AG04450 (cell line): ENCODE measurements at regions of chr4 and their contacts with region 1.

Region 1: GRCh38 chr4:88217169-88217568 is 58.7 kb upstream of the ABCG2 start:
- DNase-seq: no peak
- H3K4me3 ChIP-seq: no peak overlapping the region
- H3K27ac ChIP-seq: no peak overlapping the region
- H3K27me3 ChIP-seq: peaks cover 5% of the 10 kb centered on the region
- CTCF ChIP-seq: no peak

Region 2: GRCh38 chr4:87749883-87750282 is 467.3 kb before region 1 on chr4:
- CTCF ChIA-PET with region 1: no interaction called
- POLR2A ChIA-PET with region 1: no interaction called
- DNase-seq: no peak
- H3K4me3 ChIP-seq: no peak overlapping the region
- H3K27ac ChIP-seq: no peak overlapping the region
- H3K27me3 ChIP-seq: no peaks in the 10 kb centered on the region
- CTCF ChIP-seq: no peak

Region 3: DNA sequence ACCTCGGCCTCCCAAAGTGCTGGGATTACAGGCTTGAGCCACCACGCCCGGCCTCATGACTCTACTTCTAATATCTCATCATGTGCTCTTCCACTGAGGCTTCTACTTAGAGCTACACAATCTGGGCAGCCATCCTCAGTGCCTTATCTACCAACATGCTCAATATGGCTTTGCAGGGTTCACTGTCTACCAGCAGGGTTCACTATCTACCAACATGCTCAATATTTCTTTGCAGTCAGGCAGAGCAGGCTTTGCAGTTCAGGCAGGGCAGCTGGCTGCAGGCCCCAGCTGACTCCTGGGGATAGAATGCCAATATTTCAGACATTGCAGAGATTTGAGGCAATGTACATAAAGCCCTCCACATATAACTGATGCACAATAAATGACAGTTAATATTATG is 162.3 kb before region 1 on chr4:
- CTCF ChIA-PET with region 1: interaction called, 121 read pairs
- POLR2A ChIA-PET with region 1: no interaction called
- DNase-seq: peak; percentile 38
- H3K4me3 ChIP-seq: no peak overlapping the region
- H3K27ac ChIP-seq: no peak overlapping the region
- H3K27me3 ChIP-seq: no peaks in the 10 kb centered on the region
- CTCF ChIP-seq: peak; percentile 76

Region 4: GRCh38 chr4:88162626-88163025 is 54.5 kb before region 1 on chr4:
- CTCF ChIA-PET with region 1: no interaction called
- POLR2A ChIA-PET with region 1: no interaction called
- DNase-seq: no peak
- H3K4me3 ChIP-seq: no peak overlapping the region
- H3K27ac ChIP-seq: no peak overlapping the region
- H3K27me3 ChIP-seq: no peaks in the 10 kb centered on the region
- CTCF ChIP-seq: no peak

Region 5: DNA sequence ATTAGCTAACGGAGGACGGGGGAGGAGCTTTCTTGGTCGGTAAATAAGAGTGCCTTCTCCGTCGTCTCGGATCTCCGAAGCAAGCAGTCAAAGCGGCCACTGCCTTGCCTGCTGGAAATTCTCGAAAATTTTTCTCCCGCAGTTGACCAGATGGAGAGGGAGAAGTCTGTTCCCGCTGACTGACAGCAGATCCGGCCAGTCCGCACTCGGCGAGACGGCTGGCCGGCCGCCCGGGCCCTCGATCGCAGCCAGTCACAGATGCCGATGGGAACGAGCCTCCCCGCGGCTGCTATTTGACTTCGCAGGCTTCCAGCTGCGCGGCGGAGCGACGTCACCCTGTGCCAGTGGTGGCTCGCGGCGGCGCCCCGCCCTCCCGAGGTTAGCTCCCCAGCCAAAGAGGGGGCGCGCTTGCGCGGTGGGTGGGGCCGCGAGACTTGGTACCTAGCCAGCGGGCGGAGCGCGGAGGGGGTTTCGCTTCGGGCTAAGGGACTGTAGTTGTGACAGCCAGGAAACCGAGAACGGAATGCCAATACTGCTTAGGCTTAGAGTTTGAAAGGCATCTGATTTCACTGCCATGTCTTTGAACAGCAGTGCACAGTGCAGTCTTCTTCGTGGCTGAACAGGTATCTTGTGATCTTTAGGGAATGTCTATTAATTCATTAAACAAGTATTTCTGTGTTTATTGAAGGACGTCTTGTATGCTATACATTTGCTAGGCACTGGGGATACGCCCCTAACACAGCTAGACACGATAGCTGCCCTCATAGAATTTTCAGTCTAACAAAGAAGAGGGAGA is 67.5 kb after region 1 on chr4 and contains the start of gene PPM1K:
- CTCF ChIA-PET with region 1: interaction called, 11 read pairs
- POLR2A ChIA-PET with region 1: no interaction called
- DNase-seq: peak; percentile 97
- H3K4me3 ChIP-seq: peak within 1 kb of the TSS; percentile 90
- H3K27ac ChIP-seq: peak within 1 kb of the TSS; percentile 95
- H3K27me3 ChIP-seq: peaks cover 5% of the 10 kb centered on the region
- CTCF ChIP-seq: no peak; the same call in 1 of the 2 replicates
- polyA plus RNA-seq, gene PPM1K: 7.8 and 9.6 TPM in 2 replicates